Esophagus muscularis mucosa (tissue), 4 donors: ENCODE measurements at regions of chr1 and their contacts with region 1.

Region 1: DNA sequence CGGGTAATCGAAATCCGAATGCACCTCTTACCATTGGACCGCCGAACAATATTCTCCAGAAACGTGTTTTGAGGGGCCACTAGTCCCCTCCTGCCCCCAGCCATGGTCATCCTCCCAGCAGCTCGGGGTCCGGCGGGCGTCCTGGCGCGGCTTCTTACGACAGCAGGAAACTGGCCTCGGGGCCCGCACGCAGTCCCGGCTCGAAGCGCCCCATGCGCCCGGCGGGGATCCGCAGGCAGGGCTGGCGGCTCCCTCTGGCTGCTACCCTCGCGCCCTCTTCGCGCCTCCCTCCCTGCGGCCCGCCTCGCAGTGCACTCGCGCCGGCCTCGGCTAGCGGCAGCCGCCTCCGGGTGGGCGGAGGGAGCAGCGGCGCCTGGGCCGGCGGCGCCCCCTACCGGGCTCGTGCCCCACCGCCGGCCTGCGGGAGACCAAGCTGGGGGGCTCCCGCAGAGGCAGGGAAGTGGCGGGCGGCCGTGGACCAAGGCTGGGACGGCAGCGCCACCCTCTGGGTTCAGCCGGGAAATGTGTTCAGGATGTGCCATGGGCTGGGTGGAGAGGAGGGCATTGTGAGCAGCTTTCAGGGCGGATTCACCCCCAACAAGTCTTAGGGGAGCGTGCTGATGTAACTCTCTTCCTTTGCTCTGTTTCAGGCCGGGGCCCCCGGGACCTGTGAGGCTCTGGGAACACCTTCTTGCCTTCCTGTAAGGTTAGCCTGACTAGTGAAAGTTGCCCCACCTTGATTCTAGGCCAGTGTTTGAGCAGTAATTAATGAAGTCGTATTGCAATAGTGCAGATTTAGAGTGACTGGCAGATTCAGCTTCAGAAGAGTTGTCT is at the start of gene KCNH1:
- DNase-seq: no peak
- H3K4me3 ChIP-seq: peak within 1 kb of the TSS; percentile 53 to 66 (median 56)
- H3K27ac ChIP-seq: peak within 1 kb of the TSS in 1 of 4 donors; percentile 7
- H3K4me1 ChIP-seq: peaks cover 7 to 22% (median 20%) of the 10 kb centered on the region in 4 donors
- H3K27me3 ChIP-seq: peaks cover 0 to 54% (median 14%) of the 10 kb centered on the region in 4 donors
- CTCF ChIP-seq: peak; percentile 86 to 91 (median 91)
- EP300 ChIP-seq: no peak
- POLR2A ChIP-seq: no peak
- total RNA-seq, gene KCNH1: 0.11 to 0.78 (median 0.46) TPM

Region 2: GRCh38 chr1:210407207-210407886 is 726.7 kb before region 1 on chr1:
- intact Hi-C with region 1: loop called (anchors 2 kb)
- DNase-seq: peak; percentile 91
- H3K4me3 ChIP-seq: no peak overlapping the region
- H3K27ac ChIP-seq: no peak overlapping the region
- H3K4me1 ChIP-seq: no peaks in the 10 kb centered on the region
- H3K27me3 ChIP-seq: no peaks in the 10 kb centered on the region
- CTCF ChIP-seq: peak; percentile 76 to 97 (median 94)
- EP300 ChIP-seq: no peak
- POLR2A ChIP-seq: no peak

Region 3: DNA sequence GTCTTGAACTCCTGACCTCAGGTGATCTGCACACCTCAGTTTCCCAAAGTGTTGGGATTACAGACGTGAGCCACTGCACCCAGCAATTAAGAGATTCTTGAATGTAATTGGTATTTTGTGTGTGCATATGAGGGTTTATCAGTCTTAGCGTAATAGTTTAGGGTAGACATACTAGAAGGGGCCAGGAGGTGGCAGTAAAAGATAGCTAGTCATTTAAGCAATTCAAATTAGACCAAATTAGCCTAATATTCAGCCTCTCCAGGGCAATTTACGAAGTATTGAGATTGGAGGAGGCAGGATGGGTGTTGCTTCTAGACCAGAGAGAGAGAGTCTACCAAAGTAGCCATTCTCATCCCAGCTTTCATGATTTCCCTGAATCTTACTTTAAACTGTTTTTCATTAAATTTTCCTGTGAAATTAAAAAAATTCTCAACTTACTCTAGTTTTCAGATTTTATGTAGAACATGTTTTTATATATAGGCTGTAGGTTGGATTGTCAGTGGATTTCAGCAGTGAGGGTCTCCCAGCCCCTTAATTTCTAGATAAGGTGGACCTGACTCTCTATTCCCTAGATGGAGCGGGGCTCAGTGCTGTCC is 685.7 kb before region 1 on chr1:
- intact Hi-C with region 1: loop called (anchors 2 kb)
- DNase-seq: no peak
- H3K4me3 ChIP-seq: no peak overlapping the region
- H3K27ac ChIP-seq: no peak overlapping the region
- H3K4me1 ChIP-seq: no peaks in the 10 kb centered on the region
- H3K27me3 ChIP-seq: no peaks in the 10 kb centered on the region
- CTCF ChIP-seq: peak; percentile 32 to 52 (median 46)
- EP300 ChIP-seq: no peak
- POLR2A ChIP-seq: no peak

Region 4: DNA sequence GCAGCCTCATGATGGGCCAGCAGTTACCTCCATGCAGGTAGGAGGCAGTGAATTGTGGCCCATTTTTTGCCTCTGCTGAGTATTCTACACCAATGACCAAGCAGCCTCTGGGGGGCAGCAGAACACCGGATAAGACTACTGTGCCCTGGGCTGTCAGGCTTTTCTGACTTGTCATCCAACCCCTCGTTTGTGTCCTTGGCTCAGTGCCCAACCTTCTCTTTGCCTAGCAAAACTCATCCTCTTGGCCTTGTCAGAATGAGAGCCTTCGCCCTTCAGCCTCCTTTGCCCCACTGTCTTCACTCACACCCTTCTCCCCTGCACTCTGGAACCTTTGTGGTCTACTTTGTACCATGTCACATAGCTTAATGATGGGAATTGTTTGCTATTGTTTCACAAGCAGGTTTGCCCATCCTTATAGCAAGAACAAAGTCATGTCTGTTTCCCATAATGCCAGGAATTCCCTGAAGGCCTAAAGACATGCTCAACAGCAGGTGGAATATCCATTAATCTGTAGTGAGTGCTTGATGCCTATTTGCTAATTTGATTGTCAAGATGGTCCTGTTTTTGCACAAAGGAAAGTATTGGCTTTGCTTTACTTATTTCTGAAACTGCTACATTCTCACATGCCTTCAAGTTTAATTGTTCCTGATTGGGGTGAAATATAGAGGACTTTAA is 549.5 kb before region 1 on chr1:
- intact Hi-C with region 1: loop called (anchors 5 kb)
- DNase-seq: peak; percentile 90
- H3K4me3 ChIP-seq: no peak overlapping the region
- H3K27ac ChIP-seq: no peak overlapping the region
- H3K4me1 ChIP-seq: peaks cover 0 to 13% (median 7%) of the 10 kb centered on the region in 4 donors
- H3K27me3 ChIP-seq: no peaks in the 10 kb centered on the region
- CTCF ChIP-seq: peak; percentile 45 to 53 (median 47)
- EP300 ChIP-seq: no peak
- POLR2A ChIP-seq: no peak

Region 5: GRCh38 chr1:211833174-211833820 is 699.2 kb after region 1 on chr1:
- intact Hi-C with region 1: no loop called
- DNase-seq: no peak
- H3K4me3 ChIP-seq: no peak overlapping the region
- H3K27ac ChIP-seq: no peak overlapping the region
- H3K4me1 ChIP-seq: peaks cover 8 to 23% (median 21%) of the 10 kb centered on the region in 4 donors
- H3K27me3 ChIP-seq: peaks cover 0 to 5% (median 0%) of the 10 kb centered on the region in 4 donors
- CTCF ChIP-seq: no peak
- EP300 ChIP-seq: no peak
- POLR2A ChIP-seq: no peak